ENCODE measurements at regions of chr12 and their contacts with region 1.

Region 1: GRCh38 chr12:17763366-17763765 is 326.6 kb downstream of the RERGL start:
- ATAC-seq: no peak
- H3K4me3 ChIP-seq: no peak overlapping the region
- H3K27ac ChIP-seq: no peak overlapping the region
- H3K4me1 ChIP-seq: no peaks in the 10 kb centered on the region

Region 2: DNA sequence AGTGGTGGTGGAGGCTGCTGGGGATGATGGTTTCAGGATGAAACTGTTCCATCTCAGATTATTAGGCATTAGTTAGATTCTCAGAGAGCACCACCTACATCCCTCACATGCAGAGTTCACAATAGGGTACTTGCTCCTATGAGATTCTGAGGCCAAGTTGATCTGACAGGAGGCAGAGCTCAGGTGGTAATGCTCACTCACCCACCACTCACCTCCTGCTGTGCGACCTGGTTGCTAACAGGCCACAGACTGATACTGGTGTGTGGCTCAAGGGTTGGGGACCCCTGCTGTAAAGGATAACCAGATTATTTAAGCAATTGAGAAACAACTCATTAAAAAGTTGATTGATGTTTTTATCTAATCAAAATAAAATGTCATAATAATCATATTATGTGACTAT is 78.1 kb after region 1 on chr12:
- in situ Hi-C with region 1: loop called in 1 of 9 experiments (anchors 10 kb)
- ATAC-seq: no peak
- H3K4me3 ChIP-seq: no peak overlapping the region
- H3K27ac ChIP-seq: no peak overlapping the region
- H3K4me1 ChIP-seq: no peaks in the 10 kb centered on the region

Region 3: DNA sequence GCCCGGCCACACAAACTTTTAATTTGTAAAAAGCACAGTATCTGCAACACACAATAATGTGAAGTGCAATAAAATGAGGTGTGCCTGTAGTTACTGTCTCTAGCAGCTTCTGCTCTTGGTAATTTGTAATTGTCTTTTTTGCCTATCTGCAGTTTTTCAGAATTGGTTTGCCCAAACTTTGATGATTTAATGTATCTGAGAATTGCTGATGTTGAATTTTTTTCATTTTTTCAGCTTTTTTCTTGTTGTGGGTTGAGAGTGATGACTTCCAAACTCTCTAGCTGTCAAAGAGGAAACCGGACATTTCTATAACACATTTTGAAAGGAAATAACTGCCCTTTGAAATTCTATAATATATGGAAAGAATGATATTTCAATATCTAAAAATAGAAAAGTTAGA is 89.7 kb after region 1 on chr12:
- in situ Hi-C with region 1: loop called in 3 of 9 experiments (anchors 5 to 10 kb)
- ATAC-seq: no peak
- H3K4me3 ChIP-seq: no peak overlapping the region
- H3K27ac ChIP-seq: no peak overlapping the region
- H3K4me1 ChIP-seq: no peaks in the 10 kb centered on the region